Endothelial cell of umbilical vein (primary cell): ENCODE measurements at regions of chr10 and their contacts with region 1.

Region 1: DNA sequence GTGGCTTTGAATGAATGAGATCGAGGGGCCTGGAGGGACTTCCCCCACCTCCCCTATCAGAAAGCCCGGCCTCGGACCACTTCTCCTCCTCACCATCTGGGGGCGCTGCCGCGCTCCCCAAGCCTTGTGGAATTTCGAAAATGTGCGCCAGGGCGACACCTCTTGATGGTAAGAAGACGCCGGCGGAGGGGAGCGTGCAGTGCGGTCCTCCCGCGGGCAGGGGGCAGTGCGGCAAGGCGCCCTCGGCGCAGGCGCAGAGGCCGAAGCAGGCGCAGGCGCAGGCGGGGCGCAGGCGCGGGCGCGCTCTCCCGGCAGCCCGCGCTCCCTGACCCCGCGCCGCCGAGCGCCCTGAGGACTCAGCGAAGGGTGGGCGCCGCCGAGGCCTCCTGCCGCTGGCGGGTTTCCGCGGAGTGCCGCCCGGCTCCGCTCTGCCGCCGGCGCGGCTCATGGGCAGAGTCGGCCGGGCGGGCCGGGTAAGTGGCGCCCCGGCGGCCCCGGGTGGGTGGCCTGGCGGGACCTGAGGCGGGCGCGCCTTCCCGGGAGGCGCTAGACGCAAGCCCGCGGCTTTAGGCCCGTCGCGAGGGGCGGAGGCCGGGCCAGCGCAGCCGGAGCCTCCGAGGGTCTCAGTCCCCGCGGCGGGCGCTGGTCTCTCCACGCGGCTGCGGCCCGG is at the start of gene RBM17:
- DNase-seq: peak; percentile 97
- H3K4me3 ChIP-seq: peak within 1 kb of the TSS; percentile 59 to 85 (median 74)
- H3K27ac ChIP-seq: peak within 1 kb of the TSS; percentile 83
- H3K4me1 ChIP-seq: peaks cover 37% of the 10 kb centered on the region
- H3K27me3 ChIP-seq: no peaks in the 10 kb centered on the region
- CTCF ChIP-seq: peak; percentile 100
- POLR2A ChIP-seq: peak; percentile 83
- total RNA-seq, gene RBM17: 148 TPM in 2 replicates

Region 2: DNA sequence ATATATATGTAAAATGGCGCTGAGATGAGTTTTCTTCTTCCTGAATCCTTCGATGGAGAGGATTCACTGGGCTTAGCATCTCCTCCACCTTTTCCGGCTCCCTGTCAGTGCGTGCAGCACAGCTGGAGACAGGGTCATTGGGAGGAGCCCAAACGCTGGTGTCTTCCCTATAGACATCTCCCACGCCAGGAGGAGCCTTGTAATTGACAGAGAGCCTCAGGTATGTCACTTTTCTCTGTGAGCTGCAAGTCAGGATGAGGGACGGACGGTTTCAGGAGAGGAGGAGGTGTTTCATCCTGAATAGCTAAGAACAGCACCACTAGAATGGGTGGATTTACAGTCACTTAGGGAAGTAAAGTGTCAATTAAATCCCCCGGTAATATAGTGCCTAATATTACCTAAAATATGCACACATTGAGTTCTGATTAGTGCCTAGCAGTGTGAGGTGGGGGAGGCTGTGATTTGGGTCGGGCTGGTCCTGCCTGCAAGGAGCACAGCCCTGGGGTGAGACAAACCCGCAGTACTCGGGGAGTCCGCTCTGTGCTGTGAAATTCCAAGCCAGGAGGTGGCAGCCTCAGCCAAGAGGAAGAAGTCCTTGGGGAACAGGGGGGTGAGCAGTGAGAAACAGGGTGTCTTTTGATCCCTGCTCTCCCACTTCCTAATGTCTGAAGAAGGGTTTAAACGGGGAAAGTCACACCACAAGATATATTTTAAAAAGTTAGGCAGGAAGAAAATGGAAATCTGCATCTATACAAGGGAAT is 139.7 kb before region 1 on chr10:
- CTCF ChIA-PET with region 1: interaction called, 20 read pairs
- POLR2A ChIA-PET with region 1: interaction called, 11 read pairs
- dilution Hi-C with region 1: loop called (anchors 25 kb)
- intact Hi-C with region 1: loop called (anchors 1 kb)
- DNase-seq: peak; percentile 82
- H3K4me3 ChIP-seq: no peak overlapping the region
- H3K27ac ChIP-seq: no peak overlapping the region
- H3K4me1 ChIP-seq: peaks cover 32% of the 10 kb centered on the region
- H3K27me3 ChIP-seq: no peaks in the 10 kb centered on the region
- CTCF ChIP-seq: peak; percentile 45 to 66
- POLR2A ChIP-seq: no peak

Region 3: DNA sequence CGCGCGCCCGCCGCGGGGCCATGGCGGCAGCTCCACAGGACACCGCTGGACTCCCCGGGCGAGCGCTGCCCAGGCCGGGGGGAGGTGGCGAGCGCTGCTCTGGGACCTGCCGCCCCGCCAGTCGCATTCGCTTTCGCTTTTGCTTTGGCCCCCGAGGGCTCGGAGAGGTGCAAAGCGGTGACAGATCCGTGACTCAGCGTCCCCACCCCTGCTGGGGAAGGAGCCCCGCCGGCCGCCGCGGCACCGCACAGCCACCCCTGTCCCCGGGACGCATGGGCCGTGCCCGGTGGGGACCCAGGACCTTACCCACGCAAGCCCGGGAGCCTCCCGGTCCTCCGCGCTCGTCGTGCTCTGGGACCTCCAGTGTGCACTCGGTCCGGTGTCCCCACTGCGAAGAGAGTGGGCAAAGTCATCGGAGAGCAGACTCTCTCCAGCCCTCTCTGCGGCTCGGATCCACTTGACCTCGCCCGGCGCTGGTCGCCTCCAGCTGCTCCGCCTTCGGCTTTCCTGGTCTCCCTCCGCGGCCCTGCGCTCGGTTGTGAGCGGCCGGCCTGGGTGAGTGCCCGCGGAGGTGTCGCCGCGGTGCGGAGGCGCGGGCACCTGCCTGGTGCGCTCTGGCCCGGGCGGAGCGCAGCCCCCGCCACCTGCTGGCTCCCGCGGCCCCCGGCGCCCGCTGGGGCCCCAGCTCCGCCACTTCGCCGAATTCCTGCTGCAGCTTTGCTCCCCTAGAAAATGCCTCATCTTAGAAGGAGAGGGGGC is 111.2 kb before region 1 on chr10 and contains the start of gene IL15RA:
- CTCF ChIA-PET with region 1: interaction called, 5 read pairs
- POLR2A ChIA-PET with region 1: no interaction called
- dilution Hi-C with region 1: loop called (anchors 25 kb)
- intact Hi-C with region 1: loop called (anchors 10 kb)
- DNase-seq: peak; percentile 82
- H3K4me3 ChIP-seq: peak within 1 kb of the TSS; percentile 10 to 98 (median 47)
- H3K27ac ChIP-seq: peak within 1 kb of the TSS; percentile 60
- H3K4me1 ChIP-seq: peaks cover 14% of the 10 kb centered on the region
- H3K27me3 ChIP-seq: peaks cover 0 to 2% of the 10 kb centered on the region in 2 experiments
- CTCF ChIP-seq: peak; percentile 6 to 13
- POLR2A ChIP-seq: no peak
- total RNA-seq, gene IL15RA: 16.1 and 18.8 TPM in 2 replicates

Region 4: DNA sequence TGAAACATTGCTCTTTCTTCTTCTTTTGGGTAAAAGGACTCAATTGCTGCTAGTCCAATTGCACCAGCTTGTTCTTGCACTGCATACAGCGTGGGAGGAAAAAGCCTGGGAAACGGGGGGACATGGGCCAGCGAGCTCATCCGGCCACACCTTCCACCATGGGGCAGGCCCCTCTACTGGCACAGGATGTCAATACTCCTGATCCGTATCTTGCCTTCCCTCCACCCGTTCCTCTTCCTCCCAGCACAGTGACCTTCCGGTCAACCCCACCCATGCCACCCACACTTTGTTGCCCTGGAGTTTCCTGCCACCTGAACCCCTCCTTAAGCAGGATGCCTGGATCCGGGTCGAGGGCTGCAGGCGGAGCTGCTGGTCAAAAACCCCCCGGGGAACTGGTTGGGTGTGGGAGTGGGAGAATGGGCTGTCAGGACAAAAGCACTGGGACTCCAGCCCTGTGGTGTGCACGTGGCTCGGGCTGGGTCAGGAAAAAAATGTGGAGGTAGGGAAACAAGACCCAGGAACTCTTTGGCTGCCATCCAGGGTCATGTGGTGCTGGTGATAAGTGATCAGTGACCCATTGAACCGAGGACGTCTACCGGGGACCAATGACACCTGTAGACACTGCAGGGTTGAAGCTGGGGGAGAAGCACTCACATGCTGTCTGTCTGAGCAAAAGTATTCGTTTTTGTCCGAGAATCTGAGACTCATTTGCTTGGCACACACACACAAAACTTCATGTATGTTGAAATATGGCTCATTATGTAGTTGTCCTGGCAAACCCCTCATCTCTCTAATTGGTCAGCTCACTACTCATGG is 34.8 kb before region 1 on chr10:
- CTCF ChIA-PET with region 1: no interaction called
- POLR2A ChIA-PET with region 1: no interaction called
- dilution Hi-C with region 1: no loop called
- intact Hi-C with region 1: loop called (anchors 2 kb)
- DNase-seq: no peak
- H3K4me3 ChIP-seq: no peak overlapping the region
- H3K27ac ChIP-seq: no peak overlapping the region
- H3K4me1 ChIP-seq: peaks cover 9% of the 10 kb centered on the region
- H3K27me3 ChIP-seq: peaks cover 3 to 5% of the 10 kb centered on the region in 2 experiments
- CTCF ChIP-seq: no peak
- POLR2A ChIP-seq: no peak

Region 5: GRCh38 chr10:6144406-6145165 is 55.7 kb after region 1 on chr10:
- CTCF ChIA-PET with region 1: interaction called, 6 read pairs
- POLR2A ChIA-PET with region 1: interaction called, 5 read pairs
- dilution Hi-C with region 1: no loop called
- intact Hi-C with region 1: loop called (anchors 1 kb)
- DNase-seq: peak; percentile 84
- H3K4me3 ChIP-seq: peak overlapping the region; percentile 65 to 84 (median 81)
- H3K27ac ChIP-seq: peak overlapping the region; percentile 90
- H3K4me1 ChIP-seq: peaks cover 10% of the 10 kb centered on the region
- H3K27me3 ChIP-seq: no peaks in the 10 kb centered on the region
- CTCF ChIP-seq: no peak
- POLR2A ChIP-seq: peak; percentile 82

Region 6: DNA sequence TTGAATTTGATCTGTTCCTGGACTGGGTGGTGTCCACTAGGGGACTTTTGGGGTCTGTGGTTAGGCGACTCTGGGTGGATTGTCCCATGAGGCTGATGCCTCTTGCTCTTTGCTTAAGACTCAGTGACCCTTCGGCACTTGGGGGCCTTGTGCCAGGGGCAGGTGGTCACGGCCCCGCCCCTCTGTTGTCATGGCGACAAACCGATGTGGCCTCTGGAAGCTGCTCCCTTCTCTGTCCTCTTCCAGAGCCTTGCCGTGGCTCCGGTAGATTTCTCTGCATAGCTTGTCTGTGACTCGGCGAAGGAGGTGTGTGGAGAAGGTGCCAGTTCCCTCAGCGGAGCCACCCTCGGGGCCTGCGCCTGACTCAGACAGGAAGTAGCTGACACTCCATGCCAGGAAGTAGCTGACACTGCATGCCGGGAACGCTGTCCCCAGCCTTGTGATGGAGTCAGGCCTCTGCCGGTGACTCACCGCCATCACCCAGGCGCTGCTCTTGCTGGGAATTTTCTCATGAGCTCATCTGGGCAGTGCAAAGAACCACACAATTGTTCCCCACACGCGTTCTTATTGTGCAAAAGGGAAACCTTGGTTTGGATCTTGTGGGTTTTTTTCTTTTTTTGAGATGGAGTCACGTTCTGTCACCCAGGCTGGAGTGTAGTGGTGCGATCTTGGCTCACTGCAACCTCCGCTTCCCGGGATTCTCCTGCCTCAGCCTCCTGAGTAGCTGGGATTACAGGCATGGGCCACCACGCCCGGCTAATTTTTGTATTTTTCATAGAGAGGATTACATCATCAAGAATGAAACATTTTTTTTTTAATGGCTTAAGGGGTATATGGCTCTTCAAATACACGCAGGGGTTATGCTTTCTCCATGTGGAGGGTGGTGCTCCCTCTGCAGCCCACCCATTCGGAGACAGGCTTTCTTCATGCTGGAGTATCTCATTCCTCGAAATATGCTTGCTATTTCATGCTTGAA is 186.5 kb after region 1 on chr10:
- CTCF ChIA-PET with region 1: interaction called, 5 read pairs
- POLR2A ChIA-PET with region 1: no interaction called
- dilution Hi-C with region 1: no loop called
- intact Hi-C with region 1: loop called (anchors 1 kb)
- DNase-seq: peak; percentile 94
- H3K4me3 ChIP-seq: peak overlapping the region in 1 of 3 experiments; percentile 20
- H3K27ac ChIP-seq: peak overlapping the region; percentile 88
- H3K4me1 ChIP-seq: peaks cover 16% of the 10 kb centered on the region
- H3K27me3 ChIP-seq: no peaks in the 10 kb centered on the region
- CTCF ChIP-seq: peak in 1 of 2 donors; percentile 3
- POLR2A ChIP-seq: peak; percentile 42